CD8-positive, alpha-beta memory T cell (primary cell): ENCODE measurements at regions of chr21 and their contacts with region 1.

Region 1: DNA sequence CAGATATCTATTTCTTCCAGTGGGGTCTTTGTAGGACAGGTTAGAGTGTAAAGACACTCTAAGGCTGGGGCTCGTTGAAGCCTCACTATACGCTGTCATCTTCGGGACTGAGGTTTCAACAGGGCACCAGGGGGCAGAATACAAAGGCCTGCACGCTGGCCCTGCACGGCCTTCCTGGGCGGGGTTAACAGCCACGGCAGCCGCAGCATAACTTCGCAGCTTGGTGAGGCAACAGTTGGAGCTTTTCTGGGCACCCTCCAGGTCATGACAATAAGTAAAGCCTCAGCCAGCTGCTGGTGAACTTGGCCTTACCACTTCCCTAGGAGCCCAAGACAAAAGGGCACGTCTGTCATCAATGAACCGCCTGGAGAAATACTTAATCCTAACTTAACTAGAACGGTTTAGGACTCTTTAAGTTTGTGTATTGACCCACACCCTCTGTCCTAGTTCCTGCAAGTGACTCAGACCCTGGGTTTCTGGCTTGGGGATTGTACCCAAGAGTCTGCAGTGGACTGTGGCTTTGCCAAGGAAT is 2.3 kb upstream of the RUNX1 start:
- DNase-seq: peak; percentile 69 to 89 (median 81)
- H3K4me3 ChIP-seq: peak overlapping the region; percentile 2
- H3K4me3 Mint-ChIP-seq: peak overlapping the region; percentile 52 to 98 (median 97)
- H3K27ac ChIP-seq: peak overlapping the region; percentile 4
- H3K27ac Mint-ChIP-seq: peak overlapping the region; percentile 92 to 98 (median 97)
- H3K4me1 ChIP-seq: peaks cover 43% of the 10 kb centered on the region
- H3K4me1 Mint-ChIP-seq: peaks cover 43 to 48% (median 47%) of the 10 kb centered on the region in 3 donors
- H3K27me3 ChIP-seq: no peaks in the 10 kb centered on the region
- H3K27me3 Mint-ChIP-seq: peaks cover 0 to 20% of the 10 kb centered on the region in 2 donors

Region 2: GRCh38 chr21:34986561-34987500 is 64.5 kb before region 1 on chr21:
- CTCF ChIA-PET with region 1: interaction called, 18 read pairs
- POLR2A ChIA-PET with region 1: interaction called, 6 read pairs
- DNase-seq: peak; percentile 22 to 83 (median 64)
- H3K4me3 ChIP-seq: peak overlapping the region; percentile 26
- H3K4me3 Mint-ChIP-seq: peak overlapping the region; percentile 51 to 84 (median 82)
- H3K27ac ChIP-seq: peak overlapping the region; percentile 8
- H3K27ac Mint-ChIP-seq: peak overlapping the region; percentile 82 to 99 (median 94)
- H3K4me1 ChIP-seq: peaks cover 94% of the 10 kb centered on the region
- H3K4me1 Mint-ChIP-seq: peaks cover 92 to 97% (median 96%) of the 10 kb centered on the region in 3 donors
- H3K27me3 ChIP-seq: no peaks in the 10 kb centered on the region
- H3K27me3 Mint-ChIP-seq: no peaks in the 10 kb centered on the region

Region 3: DNA sequence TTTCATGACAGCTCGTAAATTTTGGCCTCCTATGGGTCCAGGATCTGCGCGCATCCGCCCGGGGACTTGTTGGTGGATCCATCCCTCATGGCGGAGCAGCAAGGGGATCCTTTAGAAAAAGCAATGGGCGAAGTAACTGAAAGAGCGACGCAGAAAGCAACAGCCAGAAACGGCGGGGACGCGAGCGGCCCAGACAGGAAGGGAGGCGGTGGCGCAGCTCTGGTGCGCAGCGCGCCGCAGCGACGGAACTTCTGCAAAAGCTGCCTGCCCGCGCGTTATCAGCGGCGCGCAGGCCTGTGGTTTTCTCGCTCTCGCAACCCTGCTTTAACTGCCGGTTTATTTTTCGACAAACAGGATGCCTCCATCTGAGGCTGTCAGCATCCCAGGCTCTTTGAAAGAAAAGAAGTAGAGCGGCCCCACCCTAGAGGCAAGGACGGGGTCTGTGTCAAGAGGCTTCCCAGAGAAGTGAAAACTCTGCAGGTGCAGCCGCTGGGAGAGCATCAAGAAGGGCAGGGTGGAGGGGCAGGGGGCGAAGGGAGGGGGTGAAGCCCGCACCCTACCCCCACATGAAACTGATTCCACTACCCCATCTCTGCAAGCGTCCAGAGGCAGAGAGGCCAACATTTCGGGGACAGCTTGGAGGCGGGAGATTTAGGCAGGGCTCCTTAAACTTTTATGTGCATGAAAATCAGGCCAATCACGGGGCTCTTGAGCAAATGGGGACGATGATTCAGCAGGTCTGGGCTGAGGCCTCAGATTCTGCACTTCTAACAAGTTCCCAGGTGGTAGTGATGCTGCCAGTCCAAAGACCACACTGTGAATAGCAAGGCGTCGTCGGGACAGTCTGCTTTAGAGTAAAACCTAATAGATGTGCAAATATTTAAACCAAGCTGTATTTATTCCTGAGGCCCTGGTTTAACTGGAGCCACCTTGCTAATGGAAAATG is 24.5 kb before region 1 on chr21:
- CTCF ChIA-PET with region 1: interaction called, 20 read pairs
- POLR2A ChIA-PET with region 1: interaction called, 40 read pairs
- DNase-seq: peak; percentile 73 to 91 (median 90)
- H3K4me3 ChIP-seq: peak overlapping the region; percentile 35
- H3K4me3 Mint-ChIP-seq: peak overlapping the region; percentile 83 to 94 (median 86)
- H3K27ac ChIP-seq: peak overlapping the region; percentile 76
- H3K27ac Mint-ChIP-seq: peak overlapping the region; percentile 96 to 100 (median 100)
- H3K4me1 ChIP-seq: peaks cover 90% of the 10 kb centered on the region
- H3K4me1 Mint-ChIP-seq: peaks cover 85 to 97% (median 95%) of the 10 kb centered on the region in 3 donors
- H3K27me3 ChIP-seq: no peaks in the 10 kb centered on the region
- H3K27me3 Mint-ChIP-seq: no peaks in the 10 kb centered on the region

Region 4: DNA sequence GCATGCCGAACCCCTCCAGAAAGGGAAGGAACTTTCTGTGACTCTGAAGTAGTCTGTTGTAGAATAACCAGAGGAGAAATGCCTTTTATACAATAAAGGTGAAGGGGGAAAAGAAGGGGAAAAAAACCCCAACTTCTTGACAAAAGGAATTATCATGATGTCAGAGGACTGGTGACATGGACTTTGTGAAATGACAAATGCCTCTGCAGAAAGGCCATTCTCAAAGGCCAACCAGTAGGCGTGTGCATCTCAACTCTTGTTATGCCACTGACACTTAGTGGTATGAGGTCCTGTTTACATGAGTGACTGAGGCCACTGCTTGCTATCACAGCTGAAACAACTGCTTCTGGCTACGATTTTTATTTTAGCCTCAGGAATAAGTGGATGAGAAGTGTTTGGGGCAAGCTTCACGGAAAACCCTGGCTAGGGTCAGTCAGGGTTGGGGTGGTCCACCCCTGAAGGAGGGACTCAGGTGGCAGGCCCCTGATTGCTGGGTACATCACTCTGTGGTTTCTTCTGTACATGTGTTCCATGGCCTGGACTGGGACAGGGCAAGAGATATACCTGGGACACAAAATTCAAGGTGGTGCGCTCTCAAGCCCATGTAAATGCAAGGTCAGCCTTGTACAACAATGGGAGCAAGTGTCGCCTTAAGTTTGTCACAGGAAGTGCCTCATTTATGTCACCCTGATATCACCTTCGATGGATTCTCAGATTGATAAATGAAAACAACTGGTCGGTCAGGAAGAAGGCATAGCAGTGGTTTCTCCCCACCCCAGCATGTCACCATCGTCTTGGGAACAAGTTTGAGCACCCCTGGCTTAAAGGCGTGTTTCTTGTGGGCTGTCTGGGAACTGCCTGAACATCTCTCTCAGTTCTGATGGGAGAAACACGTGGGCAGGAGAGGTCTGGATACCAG is 14.6 kb before region 1 on chr21:
- CTCF ChIA-PET with region 1: interaction called, 13 read pairs
- POLR2A ChIA-PET with region 1: interaction called, 14 read pairs
- DNase-seq: no peak
- H3K4me3 ChIP-seq: peak overlapping the region; percentile 23
- H3K4me3 Mint-ChIP-seq: peak overlapping the region; percentile 70 to 89 (median 77)
- H3K27ac ChIP-seq: no peak overlapping the region
- H3K27ac Mint-ChIP-seq: peak overlapping the region; percentile 89 to 97 (median 94)
- H3K4me1 ChIP-seq: peaks cover 98% of the 10 kb centered on the region
- H3K4me1 Mint-ChIP-seq: peaks cover 92 to 100% (median 99%) of the 10 kb centered on the region in 3 donors
- H3K27me3 ChIP-seq: no peaks in the 10 kb centered on the region
- H3K27me3 Mint-ChIP-seq: no peaks in the 10 kb centered on the region

Region 5: DNA sequence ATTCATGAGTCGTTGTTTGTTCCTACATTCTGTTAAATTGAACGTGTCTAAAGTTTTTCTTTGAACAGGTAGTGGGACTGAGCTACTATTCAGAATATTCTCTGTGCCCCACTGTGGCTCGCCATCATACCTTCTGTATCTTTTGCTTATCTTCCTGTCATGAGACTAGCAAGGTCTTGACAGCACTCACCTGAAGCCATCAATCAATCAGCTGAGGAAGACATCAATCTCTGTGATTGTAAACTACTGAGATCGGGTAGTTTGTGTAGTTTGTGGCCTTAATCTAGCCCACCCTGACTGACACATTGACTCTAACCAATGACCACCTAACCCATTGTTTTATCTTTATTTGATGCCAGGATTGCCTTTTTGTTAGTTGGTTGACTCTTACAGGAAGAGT is 15.5 kb after region 1 on chr21:
- CTCF ChIA-PET with region 1: interaction called, 10 read pairs
- POLR2A ChIA-PET with region 1: no interaction called
- DNase-seq: no peak
- H3K4me3 ChIP-seq: no peak overlapping the region
- H3K4me3 Mint-ChIP-seq: no peak overlapping the region
- H3K27ac ChIP-seq: no peak overlapping the region
- H3K27ac Mint-ChIP-seq: no peak overlapping the region
- H3K4me1 ChIP-seq: no peaks in the 10 kb centered on the region
- H3K4me1 Mint-ChIP-seq: peaks cover 0 to 4% (median 0%) of the 10 kb centered on the region in 3 donors
- H3K27me3 ChIP-seq: no peaks in the 10 kb centered on the region
- H3K27me3 Mint-ChIP-seq: peaks cover 0 to 4% of the 10 kb centered on the region in 2 donors

Region 6: GRCh38 chr21:35095859-35096291 is 44.5 kb after region 1 on chr21:
- CTCF ChIA-PET with region 1: no interaction called
- POLR2A ChIA-PET with region 1: no interaction called
- DNase-seq: no peak
- H3K4me3 ChIP-seq: no peak overlapping the region
- H3K4me3 Mint-ChIP-seq: no peak overlapping the region
- H3K27ac ChIP-seq: no peak overlapping the region
- H3K27ac Mint-ChIP-seq: no peak overlapping the region
- H3K4me1 ChIP-seq: no peaks in the 10 kb centered on the region
- H3K4me1 Mint-ChIP-seq: peaks cover 0 to 2% (median 0%) of the 10 kb centered on the region in 3 donors
- H3K27me3 ChIP-seq: no peaks in the 10 kb centered on the region
- H3K27me3 Mint-ChIP-seq: peaks cover 0 to 3% of the 10 kb centered on the region in 2 donors

Region 7: DNA sequence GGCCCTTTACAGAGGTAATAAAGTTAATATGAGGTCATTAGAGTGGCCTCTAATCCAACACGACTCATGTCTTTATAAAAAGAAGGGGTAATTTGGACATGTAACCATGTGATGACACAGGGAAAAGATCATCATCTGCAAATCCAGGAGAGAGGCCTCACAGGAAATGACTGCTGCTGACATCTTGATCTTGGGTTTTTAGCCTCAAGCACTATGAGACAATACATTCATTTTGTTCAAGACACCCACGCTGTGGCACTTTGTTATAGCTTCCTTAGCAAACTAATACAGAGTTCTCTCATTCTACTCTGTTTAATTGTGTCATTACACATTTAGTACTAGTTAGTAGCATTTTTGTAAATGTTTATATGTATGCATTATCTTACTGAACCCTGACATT is 61.7 kb after region 1 on chr21:
- CTCF ChIA-PET with region 1: no interaction called
- POLR2A ChIA-PET with region 1: no interaction called
- DNase-seq: no peak
- H3K4me3 ChIP-seq: no peak overlapping the region
- H3K4me3 Mint-ChIP-seq: no peak overlapping the region
- H3K27ac ChIP-seq: no peak overlapping the region
- H3K27ac Mint-ChIP-seq: no peak overlapping the region
- H3K4me1 ChIP-seq: no peaks in the 10 kb centered on the region
- H3K4me1 Mint-ChIP-seq: no peaks in the 10 kb centered on the region
- H3K27me3 ChIP-seq: no peaks in the 10 kb centered on the region
- H3K27me3 Mint-ChIP-seq: peaks cover 1 to 11% of the 10 kb centered on the region in 2 donors

Region 8: DNA sequence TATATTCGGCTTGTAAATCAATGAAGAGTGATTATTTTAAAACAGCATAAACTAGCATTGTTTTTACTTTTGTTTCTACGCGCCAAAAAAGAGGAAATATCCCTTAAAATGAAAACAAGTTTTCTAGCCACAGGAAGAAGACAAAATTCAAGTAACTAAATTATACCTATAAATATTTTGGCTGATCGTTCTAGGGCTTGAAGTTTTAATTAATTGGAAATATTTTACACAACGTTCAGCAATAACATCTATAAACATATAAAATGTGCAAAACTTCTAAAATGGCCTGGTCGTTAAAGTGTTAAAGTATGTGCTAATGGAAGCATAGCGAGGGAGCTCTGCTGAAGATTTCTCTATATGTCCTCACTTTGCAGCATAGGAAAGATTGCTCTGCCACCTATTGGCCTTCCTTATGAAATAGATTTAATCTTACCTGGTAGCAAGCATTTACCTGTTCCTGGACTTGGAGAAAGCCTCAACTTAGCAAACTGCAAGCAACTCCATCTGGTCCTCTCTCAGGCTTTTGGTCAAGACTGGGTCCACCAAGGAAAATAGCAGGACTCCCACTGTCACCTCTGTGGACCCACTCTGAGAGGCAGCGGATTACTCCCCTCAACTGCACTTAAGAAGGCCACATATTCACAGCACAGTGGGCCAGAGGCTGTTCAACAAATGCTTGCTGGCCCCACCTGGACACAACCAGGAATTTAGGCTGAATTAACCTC is 349.0 kb after region 1 on chr21:
- CTCF ChIA-PET with region 1: interaction called, 11 read pairs
- POLR2A ChIA-PET with region 1: no interaction called
- DNase-seq: peak in 4 of 5 donors; percentile 8 to 56 (median 48)
- H3K4me3 ChIP-seq: no peak overlapping the region
- H3K4me3 Mint-ChIP-seq: no peak overlapping the region
- H3K27ac ChIP-seq: no peak overlapping the region
- H3K27ac Mint-ChIP-seq: no peak overlapping the region
- H3K4me1 ChIP-seq: no peaks in the 10 kb centered on the region
- H3K4me1 Mint-ChIP-seq: no peaks in the 10 kb centered on the region
- H3K27me3 ChIP-seq: no peaks in the 10 kb centered on the region
- H3K27me3 Mint-ChIP-seq: peaks cover 0 to 14% of the 10 kb centered on the region in 2 donors